Sigmoid colon (tissue), 7 donors: ENCODE measurements at regions of chr7 and their contacts with region 1.

Region 1: GRCh38 chr7:100673300-100673941 is at the start of gene GNB2:
- DNase-seq: peak; percentile 100
- H3K4me3 ChIP-seq: peak within 1 kb of the TSS; percentile 91 to 99 (median 92)
- H3K27ac ChIP-seq: peak within 1 kb of the TSS; percentile 97 to 99 (median 98)
- H3K4me1 ChIP-seq: peaks cover 0 to 27% (median 14%) of the 10 kb centered on the region in 4 donors
- H3K27me3 ChIP-seq: no peaks in the 10 kb centered on the region
- CTCF ChIP-seq: no peak
- EP300 ChIP-seq: peak in 2 of 4 donors; percentile 5 to 11
- POLR2A ChIP-seq: no peak
- total RNA-seq, gene GNB2: 133 to 199 (median 163) TPM

Region 2: GRCh38 chr7:100478966-100479665 is 194.3 kb before region 1 on chr7 and contains the start of gene TSC22D4:
- intact Hi-C with region 1: loop called (anchors 5 kb)
- DNase-seq: peak; percentile 99
- H3K4me3 ChIP-seq: peak within 1 kb of the TSS; percentile 64 to 100 (median 90)
- H3K27ac ChIP-seq: peak within 1 kb of the TSS; percentile 93 to 96 (median 94)
- H3K4me1 ChIP-seq: peaks cover 0 to 57% (median 53%) of the 10 kb centered on the region in 4 donors
- H3K27me3 ChIP-seq: no peaks in the 10 kb centered on the region
- CTCF ChIP-seq: no peak
- EP300 ChIP-seq: peak in 1 of 4 donors; percentile 53
- POLR2A ChIP-seq: peak; percentile 92 to 94
- total RNA-seq, gene TSC22D4: 24.4 to 31.6 (median 28.5) TPM

Region 3: GRCh38 chr7:100604028-100604975 is 69.1 kb before region 1 on chr7:
- intact Hi-C with region 1: loop called (anchors 2 kb)
- DNase-seq: peak; percentile 93
- H3K4me3 ChIP-seq: peak overlapping the region; percentile 74 to 81 (median 78)
- H3K27ac ChIP-seq: peak overlapping the region; percentile 84 to 90 (median 84)
- H3K4me1 ChIP-seq: peaks cover 0 to 41% (median 29%) of the 10 kb centered on the region in 4 donors
- H3K27me3 ChIP-seq: no peaks in the 10 kb centered on the region
- CTCF ChIP-seq: peak in 3 of 4 experiments; percentile 24 to 45 (median 43)
- EP300 ChIP-seq: no peak
- POLR2A ChIP-seq: peak in 1 of 2 donors; percentile 26

Region 4: GRCh38 chr7:100626530-100627237 is 46.7 kb before region 1 on chr7:
- intact Hi-C with region 1: loop called (anchors 5 kb)
- DNase-seq: peak; percentile 93
- H3K4me3 ChIP-seq: peak overlapping the region; percentile 5 to 41 (median 26)
- H3K27ac ChIP-seq: peak overlapping the region in 1 of 4 donors; percentile 19
- H3K4me1 ChIP-seq: peaks cover 0 to 13% (median 11%) of the 10 kb centered on the region in 4 donors
- H3K27me3 ChIP-seq: peaks cover 0 to 15% (median 10%) of the 10 kb centered on the region in 3 donors
- CTCF ChIP-seq: no peak
- EP300 ChIP-seq: no peak
- POLR2A ChIP-seq: no peak